Motor neuron (in vitro differentiated cells): ENCODE measurements at regions of chr13 and their contacts with region 1.

Region 1: GRCh38 chr13:41222259-41222852 is 28.0 kb upstream of the KBTBD7 start:
- ATAC-seq: peak in 5 of 8 experiments; percentile 63 to 91 (median 83)
- H3K4me3 ChIP-seq: no peak overlapping the region
- H3K27ac ChIP-seq: no peak overlapping the region
- H3K4me1 ChIP-seq: no peaks in the 10 kb centered on the region

Region 2: GRCh38 chr13:41019011-41019487 is 203.3 kb before region 1 on chr13 and contains the start of gene ELF1:
- in situ Hi-C with region 1: no loop called
- ATAC-seq: peak; percentile 47 to 97 (median 65)
- H3K4me3 ChIP-seq: peak within 1 kb of the TSS in 3 of 5 donors; percentile 7 to 23 (median 12)
- H3K27ac ChIP-seq: peak within 1 kb of the TSS in 1 of 2 donors; percentile 73
- H3K4me1 ChIP-seq: peaks cover 4 to 27% of the 10 kb centered on the region in 2 donors
- total RNA-seq, gene ELF1: 5.9 to 48.0 (median 16.5) TPM

Region 3: GRCh38 chr13:41075034-41075433 is 147.3 kb before region 1 on chr13:
- in situ Hi-C with region 1: loop called in 2 of 9 experiments (anchors 10 to 25 kb)
- ATAC-seq: no peak
- H3K4me3 ChIP-seq: no peak overlapping the region
- H3K27ac ChIP-seq: no peak overlapping the region
- H3K4me1 ChIP-seq: no peaks in the 10 kb centered on the region

Region 4: DNA sequence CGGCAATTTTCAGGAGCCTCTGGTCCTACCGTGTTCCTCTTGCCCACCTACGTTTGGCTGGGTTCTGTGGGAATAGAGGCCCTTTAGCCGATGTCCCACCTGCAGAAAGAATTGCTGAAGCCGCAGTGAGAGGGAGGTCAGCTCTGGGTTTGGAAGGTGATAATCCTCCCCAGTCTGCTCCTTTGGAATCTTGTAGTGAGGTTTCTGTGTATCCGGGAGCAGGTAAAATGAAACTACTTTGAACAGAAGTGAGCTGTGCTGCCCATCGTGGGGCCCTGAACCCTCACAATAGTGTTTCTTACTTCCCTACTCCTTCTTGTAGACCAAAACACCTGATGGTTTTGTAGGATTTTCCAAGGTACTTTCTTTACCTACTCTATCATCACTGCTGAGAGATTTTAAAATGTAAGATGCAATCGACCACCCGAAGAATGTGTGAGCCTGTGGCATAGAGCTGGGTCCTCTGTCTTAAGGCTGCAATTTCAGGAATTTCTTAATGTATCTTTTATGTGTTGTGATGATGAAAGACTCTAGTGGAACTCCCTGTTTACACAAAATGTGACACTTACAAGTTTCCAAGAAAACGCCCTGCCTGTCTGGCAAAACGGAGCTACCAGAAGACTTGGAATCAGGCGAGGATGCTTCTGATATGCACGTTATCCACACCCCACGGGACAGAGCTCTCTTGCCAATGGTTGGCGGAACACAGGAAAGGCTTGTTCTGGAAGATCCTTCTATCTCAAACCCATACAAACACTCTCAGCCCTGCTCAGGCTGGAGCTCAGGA is 311.1 kb after region 1 on chr13:
- in situ Hi-C with region 1: no loop called
- ATAC-seq: peak in 3 of 8 experiments; percentile 68 to 98 (median 98)
- H3K4me3 ChIP-seq: no peak overlapping the region
- H3K27ac ChIP-seq: no peak overlapping the region
- H3K4me1 ChIP-seq: no peaks in the 10 kb centered on the region